ENCODE measurements at regions of chr16 and their contacts with region 1.

Region 1: DNA sequence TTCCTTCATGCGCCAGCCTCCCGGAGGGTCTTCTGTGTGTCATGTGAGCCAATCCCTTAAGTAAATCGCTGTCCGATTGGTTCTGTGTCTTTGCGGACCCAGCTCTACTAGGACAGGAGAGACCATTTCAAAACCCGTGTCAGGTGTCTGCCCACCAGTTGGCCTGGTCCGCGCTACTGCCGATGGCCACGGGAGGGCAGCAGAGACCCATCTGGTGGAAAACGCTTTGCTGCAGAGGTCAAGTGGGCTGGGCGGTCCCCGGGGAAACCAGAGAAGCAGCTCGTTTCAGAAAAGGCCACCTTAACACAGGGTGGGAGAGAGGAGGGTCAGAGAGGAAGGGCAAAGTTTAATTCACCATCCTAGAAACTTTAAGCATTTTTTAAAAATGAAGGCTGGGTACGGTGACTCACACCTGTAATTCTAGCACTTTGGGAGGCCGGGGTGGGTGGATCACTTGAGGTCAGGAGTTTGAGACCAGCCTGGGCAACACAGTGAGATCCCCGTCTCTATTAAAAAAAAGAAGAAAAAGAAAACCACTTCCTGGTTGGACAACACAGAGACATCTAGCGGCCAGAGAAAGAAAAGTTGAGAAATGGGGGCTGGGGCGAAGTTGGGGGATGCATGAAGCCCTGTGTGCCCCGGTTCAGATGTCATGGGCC is 2.8 kb upstream of the CIBAR2 start:
- DNase-seq: peak; percentile 88
- H3K27ac ChIP-seq: peak overlapping the region; percentile 40
- CTCF ChIP-seq: peak; percentile 97

Region 2: DNA sequence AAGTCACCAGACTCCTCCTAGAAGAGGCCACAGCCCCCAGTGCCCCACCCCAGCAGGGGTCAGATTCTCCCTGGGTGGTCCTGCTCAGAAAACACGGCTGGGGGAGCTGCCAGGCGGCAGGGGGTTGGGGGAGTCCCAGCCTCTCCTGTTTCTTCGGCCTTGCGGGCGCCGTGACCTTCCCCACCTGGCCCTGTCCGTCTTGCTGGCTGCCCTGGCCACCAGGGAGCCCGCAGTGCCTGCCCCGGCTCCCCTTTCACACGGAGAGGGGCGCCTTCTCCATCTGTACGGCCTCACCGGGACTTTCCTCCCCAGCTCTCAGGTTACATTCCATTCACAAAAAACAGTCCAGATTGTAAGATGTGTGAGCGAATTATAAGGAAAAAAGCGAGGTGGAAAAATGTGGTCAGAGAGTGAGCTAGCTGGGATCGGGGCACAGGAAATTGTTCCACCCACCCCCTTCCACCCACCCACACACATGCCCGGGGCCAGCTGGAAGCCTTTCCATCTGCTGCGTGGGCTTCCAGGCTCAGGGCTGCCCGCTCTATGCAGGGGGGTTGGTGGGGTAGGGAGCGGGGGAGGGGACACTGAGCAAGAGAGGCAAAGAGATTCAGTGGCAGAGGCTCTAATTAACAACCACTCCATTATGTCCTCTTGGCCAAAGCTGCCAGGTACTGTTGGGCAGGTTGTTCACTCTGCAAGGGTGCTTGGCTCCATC is 11.8 kb after region 1 on chr16:
- CTCF ChIA-PET with region 1: interaction called, 11 read pairs
- POLR2A ChIA-PET with region 1: no interaction called
- DNase-seq: peak; percentile 29
- H3K27ac ChIP-seq: peak overlapping the region; percentile 6; the same call in 1 of the 2 replicates
- CTCF ChIP-seq: no peak

Region 3: GRCh38 chr16:85162478-85163277 is 47.6 kb after region 1 on chr16:
- CTCF ChIA-PET with region 1: interaction called, 11 read pairs
- POLR2A ChIA-PET with region 1: no interaction called
- DNase-seq: no peak
- H3K27ac ChIP-seq: no peak overlapping the region
- CTCF ChIP-seq: no peak

Region 4: DNA sequence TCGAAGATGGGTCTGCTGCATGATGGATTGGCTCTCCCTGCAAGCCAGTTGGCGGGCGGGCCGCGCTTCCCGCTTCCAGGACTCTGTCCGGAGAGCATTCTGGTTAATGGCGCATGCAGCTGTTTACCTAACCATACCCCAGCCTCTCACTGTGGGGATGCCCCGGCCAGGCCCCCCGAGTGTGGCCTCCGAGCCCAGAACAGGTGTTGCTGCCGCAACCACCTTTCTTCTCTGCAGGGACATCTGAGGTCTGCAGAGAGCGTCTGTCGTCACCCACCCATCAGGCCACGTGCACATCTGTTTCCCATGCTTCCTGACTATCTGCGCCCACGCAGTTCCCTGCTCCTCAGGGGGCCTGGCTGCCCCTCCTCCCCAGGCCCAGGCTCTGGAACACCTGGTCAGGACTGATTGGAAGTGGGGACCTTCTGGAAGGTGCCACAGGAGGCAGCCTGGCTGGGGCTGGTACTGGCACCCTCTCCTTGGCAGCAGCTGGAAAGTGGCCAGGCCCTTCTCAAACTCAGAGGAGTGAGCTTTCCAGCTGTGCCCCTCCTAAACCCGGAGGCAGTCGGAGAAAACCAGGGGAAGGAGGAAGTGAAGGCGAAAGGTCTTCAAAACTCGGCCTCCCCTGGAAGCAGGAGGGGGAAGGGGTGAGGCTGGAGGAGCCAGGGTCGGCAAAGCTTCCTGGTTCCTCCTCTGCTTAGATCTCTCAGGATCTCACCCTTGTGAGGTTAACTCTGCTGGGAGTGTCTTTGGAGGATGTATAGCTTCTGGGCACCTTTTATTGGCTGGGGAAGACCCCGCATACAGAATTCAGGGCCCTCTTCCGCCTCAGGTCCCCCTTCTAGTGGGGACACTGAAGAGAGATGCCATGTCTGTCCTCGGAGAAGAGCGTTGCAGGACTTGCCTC is 61.8 kb after region 1 on chr16:
- CTCF ChIA-PET with region 1: interaction called, 10 read pairs
- POLR2A ChIA-PET with region 1: no interaction called
- DNase-seq: no peak
- H3K27ac ChIP-seq: no peak overlapping the region
- CTCF ChIP-seq: no peak

Region 5: GRCh38 chr16:85240982-85241924 is 126.2 kb after region 1 on chr16:
- CTCF ChIA-PET with region 1: interaction called, 12 read pairs
- POLR2A ChIA-PET with region 1: no interaction called
- DNase-seq: no peak
- H3K27ac ChIP-seq: no peak overlapping the region
- CTCF ChIP-seq: no peak